Activated CD8-positive, alpha-beta T cell treated with anti-CD3 and anti-CD28 coated beads for 36 hours (primary cell): ENCODE measurements at regions of chr13 and their contacts with region 1.

Region 1: GRCh38 chr13:32791545-32792172 is 205.4 kb downstream of the PDS5B start:
- DNase-seq: peak; percentile 73
- ATAC-seq: peak; percentile 95
- H3K4me3 Mint-ChIP-seq: peak overlapping the region; percentile 26
- H3K27ac Mint-ChIP-seq: peak overlapping the region; percentile 88
- H3K4me1 Mint-ChIP-seq: peaks cover 43% of the 10 kb centered on the region
- H3K27me3 Mint-ChIP-seq: no peaks in the 10 kb centered on the region
- CTCF ChIP-seq: no peak

Region 2: DNA sequence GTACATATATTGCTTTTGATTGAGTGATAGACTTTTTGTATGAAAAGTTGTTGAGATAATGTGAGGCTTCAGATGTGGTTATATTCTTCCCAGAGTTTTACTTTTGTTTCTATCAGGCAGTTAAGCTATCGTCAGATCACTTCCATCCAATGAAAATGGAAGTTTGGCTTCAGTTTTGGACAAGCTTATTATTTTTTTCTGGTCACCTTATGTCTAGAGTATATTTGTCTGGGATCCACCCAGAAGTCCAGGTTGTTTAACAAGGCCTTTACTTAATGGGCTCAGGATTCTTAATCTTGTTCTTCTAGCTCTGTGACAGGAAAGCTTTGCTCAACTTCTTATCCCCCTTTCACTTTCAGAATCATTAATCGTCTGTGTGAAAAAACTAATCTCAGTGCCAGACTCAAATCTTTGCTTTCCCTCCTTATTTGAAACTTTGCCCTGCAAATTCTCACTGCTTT is 54.5 kb before region 1 on chr13:
- CTCF ChIA-PET with region 1: no interaction called
- POLR2A ChIA-PET with region 1: no interaction called
- intact Hi-C with region 1: loop called (anchors 5 kb)
- DNase-seq: no peak
- ATAC-seq: peak; percentile 70
- H3K4me3 Mint-ChIP-seq: peak overlapping the region; percentile 78
- H3K27ac Mint-ChIP-seq: peak overlapping the region; percentile 88
- H3K4me1 Mint-ChIP-seq: peaks cover 30% of the 10 kb centered on the region
- H3K27me3 Mint-ChIP-seq: no peaks in the 10 kb centered on the region
- CTCF ChIP-seq: no peak

Region 3: DNA sequence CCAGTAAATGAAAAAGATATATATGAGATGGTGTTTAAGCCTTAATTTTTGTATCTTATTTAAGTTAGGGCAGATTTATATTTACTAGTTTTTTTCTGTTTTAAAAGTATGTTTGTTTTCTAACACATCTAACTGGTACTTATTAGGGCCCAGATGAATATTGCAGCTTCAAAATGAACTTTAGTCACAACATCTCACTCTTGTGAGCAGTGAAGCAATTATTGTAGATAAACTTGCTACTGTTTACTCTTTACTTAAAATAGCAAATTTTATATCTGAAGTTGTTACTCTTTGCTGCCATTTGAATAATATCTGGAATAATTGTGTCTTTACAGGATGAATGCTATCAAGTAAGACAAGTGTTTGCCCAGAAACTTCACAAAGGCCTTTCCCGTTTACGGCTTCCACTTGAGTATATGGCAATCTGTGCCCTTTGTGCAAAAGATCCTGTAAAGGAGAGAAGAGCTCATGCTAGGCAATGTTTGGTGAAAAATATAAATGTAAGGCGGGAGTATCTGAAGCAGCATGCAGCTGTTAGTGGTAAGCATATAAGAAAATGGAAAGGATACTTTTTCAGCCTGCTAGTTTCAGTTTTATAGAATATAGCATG is 38.6 kb before region 1 on chr13:
- CTCF ChIA-PET with region 1: no interaction called
- POLR2A ChIA-PET with region 1: no interaction called
- intact Hi-C with region 1: no loop called
- DNase-seq: no peak
- ATAC-seq: no peak
- H3K4me3 Mint-ChIP-seq: no peak overlapping the region
- H3K27ac Mint-ChIP-seq: no peak overlapping the region
- H3K4me1 Mint-ChIP-seq: peaks cover 4% of the 10 kb centered on the region
- H3K27me3 Mint-ChIP-seq: no peaks in the 10 kb centered on the region
- CTCF ChIP-seq: no peak

Region 4: GRCh38 chr13:32811297-32811800 is 19.7 kb after region 1 on chr13:
- CTCF ChIA-PET with region 1: no interaction called
- POLR2A ChIA-PET with region 1: no interaction called
- intact Hi-C with region 1: no loop called
- DNase-seq: peak; percentile 28
- ATAC-seq: peak; percentile 74
- H3K4me3 Mint-ChIP-seq: no peak overlapping the region
- H3K27ac Mint-ChIP-seq: peak overlapping the region; percentile 30
- H3K4me1 Mint-ChIP-seq: peaks cover 11% of the 10 kb centered on the region
- H3K27me3 Mint-ChIP-seq: no peaks in the 10 kb centered on the region
- CTCF ChIP-seq: no peak

Region 5: GRCh38 chr13:32905063-32905863 is 113.6 kb after region 1 on chr13:
- CTCF ChIA-PET with region 1: no interaction called
- POLR2A ChIA-PET with region 1: no interaction called
- intact Hi-C with region 1: loop called (anchors 5 kb)
- DNase-seq: peak; percentile 38
- ATAC-seq: peak; percentile 94
- H3K4me3 Mint-ChIP-seq: peak overlapping the region; percentile 65
- H3K27ac Mint-ChIP-seq: peak overlapping the region; percentile 95
- H3K4me1 Mint-ChIP-seq: peaks cover 23% of the 10 kb centered on the region
- H3K27me3 Mint-ChIP-seq: peaks cover 2% of the 10 kb centered on the region
- CTCF ChIP-seq: no peak

Region 6: DNA sequence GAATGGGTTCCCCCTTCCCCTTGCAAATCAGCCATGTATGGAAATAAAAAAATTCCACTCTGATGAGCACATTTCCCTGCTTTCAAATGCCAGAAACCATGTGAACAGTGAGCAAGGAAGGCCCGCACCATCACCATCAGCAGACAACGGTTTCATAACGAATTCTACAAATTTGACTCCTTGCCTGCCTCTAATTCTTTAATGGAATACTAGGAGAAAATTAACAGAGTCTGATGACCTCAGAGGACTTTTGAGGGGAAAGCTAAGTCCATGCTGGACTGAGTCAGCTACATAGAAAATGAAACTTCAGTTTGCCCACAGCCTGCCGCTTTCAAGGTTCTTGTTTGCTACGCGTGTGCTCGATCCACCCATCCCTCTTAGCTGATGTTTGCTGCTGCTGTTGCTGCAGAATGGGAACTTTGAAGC is 177.9 kb after region 1 on chr13:
- CTCF ChIA-PET with region 1: no interaction called
- POLR2A ChIA-PET with region 1: no interaction called
- intact Hi-C with region 1: no loop called
- DNase-seq: peak; percentile 4
- ATAC-seq: no peak
- H3K4me3 Mint-ChIP-seq: no peak overlapping the region
- H3K27ac Mint-ChIP-seq: no peak overlapping the region
- H3K4me1 Mint-ChIP-seq: no peaks in the 10 kb centered on the region
- H3K27me3 Mint-ChIP-seq: no peaks in the 10 kb centered on the region
- CTCF ChIP-seq: no peak

Region 7: DNA sequence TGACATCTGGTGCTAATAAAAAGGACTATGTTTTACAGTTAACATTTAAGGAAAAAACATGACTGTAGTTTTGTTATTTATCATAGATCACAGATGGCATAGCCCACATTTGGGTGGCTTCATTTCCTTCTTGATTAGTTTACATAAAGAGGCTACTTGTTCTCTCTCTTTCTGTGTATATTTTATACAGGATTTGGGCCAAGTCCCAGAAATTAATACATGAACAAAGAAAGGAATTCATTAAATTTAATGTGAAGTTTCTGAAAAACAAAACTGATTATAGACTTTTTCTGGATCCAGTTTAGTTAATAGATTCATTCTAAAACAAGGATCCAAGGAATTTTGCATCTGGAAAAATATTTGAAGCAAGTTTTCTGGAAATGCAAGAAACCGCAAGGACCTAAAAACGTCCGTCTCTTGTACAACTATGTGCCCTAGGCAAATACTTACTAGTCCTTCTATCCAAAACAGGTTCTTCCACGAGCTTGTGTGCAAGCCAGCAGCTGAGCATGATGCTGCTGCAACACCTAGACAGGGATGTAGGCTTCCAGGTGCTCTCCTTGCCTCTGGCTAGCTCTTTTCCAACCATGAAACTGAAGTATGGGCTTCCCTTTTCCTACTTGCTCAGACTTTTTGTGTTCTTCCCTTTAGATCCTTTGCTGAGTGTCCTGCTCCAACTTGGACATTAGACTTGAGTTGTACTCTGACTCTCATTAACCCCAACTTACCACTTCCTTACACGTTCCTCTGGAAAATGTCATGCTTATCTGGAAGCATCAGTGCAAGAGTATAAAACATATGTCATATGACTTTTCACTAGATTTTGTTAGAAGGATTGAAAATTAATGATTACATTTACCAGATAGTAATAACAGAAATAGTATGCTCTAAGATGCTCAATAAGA is 655.4 kb after region 1 on chr13:
- CTCF ChIA-PET with region 1: no interaction called
- POLR2A ChIA-PET with region 1: no interaction called
- intact Hi-C with region 1: no loop called
- DNase-seq: no peak
- ATAC-seq: no peak
- H3K4me3 Mint-ChIP-seq: no peak overlapping the region
- H3K27ac Mint-ChIP-seq: no peak overlapping the region
- H3K4me1 Mint-ChIP-seq: no peaks in the 10 kb centered on the region
- H3K27me3 Mint-ChIP-seq: peaks cover 7% of the 10 kb centered on the region
- CTCF ChIP-seq: no peak